ENCODE measurements at regions of chr21 and their contacts with region 1.

Region 1: DNA sequence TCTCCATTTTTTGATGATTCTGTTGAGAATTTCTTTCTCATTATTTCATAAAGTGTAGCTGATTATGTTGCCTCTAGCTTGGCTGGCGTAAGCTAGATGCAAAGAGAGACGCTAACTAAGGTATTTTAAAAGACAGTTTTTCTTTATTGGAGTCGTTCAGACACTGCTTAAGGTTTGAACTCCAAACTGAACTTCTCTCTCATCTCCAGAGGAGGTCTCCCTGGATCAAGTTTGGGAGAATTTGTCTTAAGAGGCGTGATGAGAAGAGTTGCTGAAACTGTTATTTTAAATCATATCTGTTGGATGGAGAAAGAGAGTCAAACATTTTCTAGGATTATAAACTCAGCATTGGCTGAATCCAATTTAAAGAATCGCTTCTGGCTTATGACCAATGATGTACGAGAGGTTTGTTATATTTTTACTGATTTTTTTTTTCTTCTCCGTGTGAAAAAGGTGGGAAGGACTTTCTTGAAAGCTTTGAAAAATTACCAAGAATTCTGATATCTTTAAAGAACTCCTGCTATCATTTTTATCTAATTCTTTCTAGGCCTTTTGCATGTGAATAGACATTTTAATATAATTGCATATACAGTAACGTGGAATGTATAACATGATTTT is 34.0 kb downstream of the MAP3K7CL start:
- DNase-seq: peak; percentile 63
- ATAC-seq: peak; percentile 82
- H3K4me3 ChIP-seq: no peak overlapping the region
- H3K27ac ChIP-seq: no peak overlapping the region
- H3K4me1 ChIP-seq: no peaks in the 10 kb centered on the region
- H3K27me3 ChIP-seq: no peaks in the 10 kb centered on the region
- CTCF ChIP-seq: peak; percentile 72
- EP300 ChIP-seq: no peak
- POLR2A ChIP-seq: no peak
- RAD21 ChIP-seq: peak; percentile 68; the same call in 1 of the 2 replicates

Region 2: GRCh38 chr21:28798798-28799197 is 365.6 kb before region 1 on chr21:
- CTCF ChIA-PET with region 1: no interaction called
- POLR2A ChIA-PET with region 1: no interaction called
- in situ Hi-C with region 1: no loop called
- intact Hi-C with region 1: no loop called
- DNase-seq: no peak
- ATAC-seq: no peak
- H3K4me3 ChIP-seq: no peak overlapping the region
- H3K27ac ChIP-seq: no peak overlapping the region
- H3K4me1 ChIP-seq: no peaks in the 10 kb centered on the region
- H3K27me3 ChIP-seq: no peaks in the 10 kb centered on the region
- CTCF ChIP-seq: no peak
- EP300 ChIP-seq: no peak
- POLR2A ChIP-seq: no peak
- RAD21 ChIP-seq: no peak

Region 3: DNA sequence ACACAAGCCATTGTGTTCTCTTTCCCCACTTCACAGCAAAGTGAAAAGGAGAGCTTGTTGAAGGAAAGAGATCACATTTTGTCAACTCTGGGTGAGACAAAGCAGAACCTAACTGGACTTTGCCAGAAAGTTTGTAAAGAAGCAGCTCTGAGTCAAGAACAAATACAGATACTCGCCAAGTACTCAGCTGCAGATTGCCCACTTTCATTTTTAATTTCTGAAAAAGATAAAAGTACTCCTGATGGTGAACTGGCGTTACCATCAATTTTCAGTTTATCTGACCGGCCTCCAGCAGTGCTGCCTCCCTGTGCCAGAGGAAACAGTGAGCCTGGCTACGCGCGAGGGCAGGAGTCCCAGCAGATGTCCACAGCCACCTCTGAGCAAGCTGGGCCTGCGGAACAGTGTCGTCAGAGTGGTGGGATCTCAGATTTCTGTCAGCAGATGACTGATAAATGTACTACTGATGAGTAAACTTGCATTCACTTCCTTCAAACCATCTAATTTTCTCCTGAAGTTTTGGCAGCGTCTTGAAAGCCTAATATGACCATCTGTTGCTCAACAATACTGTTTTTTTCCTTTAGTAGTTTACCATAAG is 178.0 kb after region 1 on chr21:
- CTCF ChIA-PET with region 1: interaction called, 10 read pairs
- POLR2A ChIA-PET with region 1: no interaction called
- in situ Hi-C with region 1: loop called (anchors 5 kb)
- intact Hi-C with region 1: no loop called
- DNase-seq: no peak
- ATAC-seq: no peak
- H3K4me3 ChIP-seq: no peak overlapping the region
- H3K27ac ChIP-seq: no peak overlapping the region
- H3K4me1 ChIP-seq: peaks cover 14% of the 10 kb centered on the region
- H3K27me3 ChIP-seq: no peaks in the 10 kb centered on the region
- CTCF ChIP-seq: no peak
- EP300 ChIP-seq: no peak
- POLR2A ChIP-seq: no peak
- RAD21 ChIP-seq: no peak

Region 4: DNA sequence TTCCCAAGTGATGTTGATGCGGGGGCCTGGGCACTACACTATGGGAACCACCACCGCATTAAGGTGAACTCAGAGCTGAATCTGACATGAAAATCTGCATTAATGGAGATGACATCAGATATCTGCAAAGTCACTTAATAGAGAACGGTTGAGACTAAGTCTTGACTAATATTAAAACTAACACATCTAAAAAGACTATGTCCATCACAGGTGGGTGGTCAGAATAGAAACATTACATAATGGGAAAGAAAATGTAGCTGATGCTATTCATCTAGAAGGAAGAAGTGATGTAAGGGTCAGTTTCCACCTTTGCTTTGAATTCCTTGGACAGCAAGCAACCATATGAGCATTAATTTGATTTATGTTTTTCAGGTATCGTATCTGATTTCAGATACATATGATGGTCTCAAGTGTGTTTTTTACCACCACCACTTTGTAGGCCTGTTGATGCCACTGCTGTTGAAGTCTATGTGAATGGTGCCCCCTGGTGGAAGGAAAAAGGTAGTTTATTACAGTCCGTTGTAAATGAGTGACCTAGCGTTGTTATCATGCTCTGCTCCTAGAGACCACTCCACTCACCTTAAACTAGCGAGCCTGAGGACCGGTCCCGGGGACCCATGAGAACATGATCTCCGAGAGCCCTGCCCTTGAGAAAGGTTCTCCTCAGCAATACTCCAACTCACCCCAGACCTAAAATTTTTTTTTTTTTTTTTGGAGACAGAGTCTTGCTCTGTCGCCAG is 207.8 kb after region 1 on chr21:
- CTCF ChIA-PET with region 1: interaction called, 19 read pairs
- POLR2A ChIA-PET with region 1: no interaction called
- in situ Hi-C with region 1: loop called (anchors 10 kb)
- intact Hi-C with region 1: loop called (anchors 1 kb)
- DNase-seq: peak; percentile 78
- ATAC-seq: peak; percentile 94
- H3K4me3 ChIP-seq: no peak overlapping the region
- H3K27ac ChIP-seq: no peak overlapping the region
- H3K4me1 ChIP-seq: no peaks in the 10 kb centered on the region
- H3K27me3 ChIP-seq: no peaks in the 10 kb centered on the region
- CTCF ChIP-seq: peak; percentile 82
- EP300 ChIP-seq: no peak
- POLR2A ChIP-seq: no peak
- RAD21 ChIP-seq: peak; percentile 69

Region 5: DNA sequence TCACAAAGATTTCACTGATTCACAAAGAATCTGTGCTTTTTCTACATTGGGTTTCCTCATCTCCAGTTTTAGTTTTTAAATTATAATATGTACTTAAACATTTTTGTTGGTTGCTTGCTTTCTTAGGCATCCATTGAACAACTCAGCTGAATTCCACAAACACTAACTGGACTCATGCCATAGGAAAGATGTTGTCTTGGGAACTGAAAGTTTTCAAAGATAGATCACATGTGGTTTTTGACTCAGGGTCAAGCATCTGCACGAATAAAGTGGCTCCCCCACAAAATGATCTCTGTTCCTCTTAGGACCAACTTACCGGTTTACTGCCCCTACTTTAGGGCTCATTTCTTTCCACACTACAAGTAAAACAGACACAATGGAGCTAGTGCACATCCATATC is 1593.9 kb after region 1 on chr21:
- CTCF ChIA-PET with region 1: no interaction called
- POLR2A ChIA-PET with region 1: no interaction called
- in situ Hi-C with region 1: no loop called
- intact Hi-C with region 1: no loop called
- DNase-seq: no peak
- ATAC-seq: no peak
- H3K4me3 ChIP-seq: no peak overlapping the region
- H3K27ac ChIP-seq: no peak overlapping the region
- H3K4me1 ChIP-seq: no peaks in the 10 kb centered on the region
- H3K27me3 ChIP-seq: no peaks in the 10 kb centered on the region
- CTCF ChIP-seq: no peak
- EP300 ChIP-seq: no peak
- POLR2A ChIP-seq: no peak
- RAD21 ChIP-seq: no peak

Measured in HepG2 (cell line).